ENCODE measurements at regions of chr10 and their contacts with region 1.

Region 1: DNA sequence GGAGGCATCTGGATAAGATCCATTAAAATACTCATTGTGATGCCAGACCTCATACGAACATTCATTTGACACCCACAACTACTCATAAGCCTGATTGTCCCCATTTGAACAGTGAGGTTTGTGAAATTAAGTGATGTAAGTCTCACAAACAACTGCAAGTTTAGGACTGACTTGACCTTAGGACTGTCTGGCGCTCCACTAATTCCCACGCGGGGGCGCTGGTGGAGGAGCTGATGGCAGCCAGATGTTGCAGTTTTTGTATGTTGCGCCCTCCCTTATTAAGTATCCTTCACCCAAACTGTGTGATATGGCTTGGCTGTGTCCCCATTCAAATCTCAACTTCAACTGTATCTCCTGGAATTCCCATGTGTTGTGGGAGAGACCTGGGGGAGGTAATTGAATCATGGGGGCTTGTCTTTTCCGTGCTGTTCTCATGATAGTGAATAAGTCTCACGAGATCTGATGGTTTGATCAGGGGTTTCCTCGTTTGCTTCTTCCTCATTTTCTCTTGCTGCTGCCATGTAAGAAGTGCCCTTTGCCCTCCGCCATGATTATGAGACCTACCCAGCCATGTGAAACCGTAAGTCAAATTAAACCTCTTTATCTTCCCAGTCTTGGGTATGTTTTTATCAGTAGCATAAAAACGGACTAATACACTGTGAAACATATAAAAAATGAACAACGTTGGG is 20.3 kb upstream of the TIAL1 start:
- DNase-seq: peak; percentile 43
- H3K4me3 Mint-ChIP-seq: no peak overlapping the region
- H3K27ac Mint-ChIP-seq: no peak overlapping the region
- H3K4me1 Mint-ChIP-seq: peaks cover 3% of the 10 kb centered on the region
- H3K27me3 Mint-ChIP-seq: no peaks in the 10 kb centered on the region

Region 2: GRCh38 chr10:119663866-119664616 is 47.0 kb after region 1 on chr10:
- CTCF ChIA-PET with region 1: interaction called, 11 read pairs
- intact Hi-C with region 1: no loop called
- DNase-seq: peak; percentile 53
- H3K4me3 Mint-ChIP-seq: peak overlapping the region; percentile 57
- H3K27ac Mint-ChIP-seq: peak overlapping the region; percentile 85
- H3K4me1 Mint-ChIP-seq: peaks cover 54% of the 10 kb centered on the region
- H3K27me3 Mint-ChIP-seq: no peaks in the 10 kb centered on the region